ENCODE measurements at regions of chr18 and their contacts with region 1.

Region 1: DNA sequence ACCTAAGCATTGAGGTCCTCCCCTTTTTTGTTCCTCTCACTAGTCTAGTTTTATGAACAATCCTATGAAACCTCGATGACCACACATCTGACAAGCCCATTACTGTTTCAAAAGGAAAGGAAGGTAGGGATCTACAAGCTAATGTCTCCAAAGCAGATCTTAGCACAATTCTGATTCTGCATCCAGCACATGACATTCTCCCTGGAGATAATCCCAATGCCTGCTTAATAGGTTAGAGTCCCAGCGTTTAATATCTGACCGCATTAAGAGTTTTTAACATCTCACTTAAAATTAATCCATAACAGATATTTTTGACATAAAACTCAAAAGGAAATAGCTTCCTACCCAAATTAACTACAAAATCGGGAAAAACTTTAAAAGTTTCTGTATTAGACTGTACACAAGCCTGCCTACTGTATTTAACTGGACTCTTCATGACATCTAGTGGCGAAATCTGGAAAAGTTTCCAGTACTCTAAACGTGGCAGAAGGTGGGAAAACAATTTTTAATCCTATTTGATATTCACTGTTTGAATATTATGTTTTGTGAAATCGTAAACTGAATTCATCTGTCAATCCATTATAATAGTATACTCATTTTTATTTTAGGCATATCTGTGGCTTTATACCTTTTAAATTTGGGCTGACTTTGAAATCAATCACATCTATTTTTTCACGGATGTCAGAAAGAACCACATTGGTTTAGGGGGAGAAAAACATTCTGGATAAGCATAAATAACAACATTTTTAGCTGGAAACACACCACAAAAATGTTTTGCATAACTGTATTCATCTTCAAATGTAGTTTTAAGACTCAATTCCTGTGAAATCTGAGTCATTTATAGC is 62.4 kb downstream of the TXNL1 start:
- DNase-seq: no peak
- ATAC-seq: peak; percentile 64
- H3K4me3 Mint-ChIP-seq: no peak overlapping the region
- H3K27ac Mint-ChIP-seq: no peak overlapping the region
- H3K4me1 Mint-ChIP-seq: no peaks in the 10 kb centered on the region
- H3K27me3 Mint-ChIP-seq: peaks cover 5% of the 10 kb centered on the region
- CTCF ChIP-seq: no peak

Region 2: GRCh38 chr18:54679318-54680149 is 1896.5 kb before region 1 on chr18:
- CTCF ChIA-PET with region 1: no interaction called
- POLR2A ChIA-PET with region 1: no interaction called
- intact Hi-C with region 1: loop called (anchors 1 kb)
- DNase-seq: no peak
- ATAC-seq: peak; percentile 50
- H3K4me3 Mint-ChIP-seq: no peak overlapping the region
- H3K27ac Mint-ChIP-seq: no peak overlapping the region
- H3K4me1 Mint-ChIP-seq: no peaks in the 10 kb centered on the region
- H3K27me3 Mint-ChIP-seq: no peaks in the 10 kb centered on the region
- CTCF ChIP-seq: no peak

Region 3: GRCh38 chr18:54983041-54983686 is 1592.9 kb before region 1 on chr18:
- CTCF ChIA-PET with region 1: interaction called, 3 read pairs
- POLR2A ChIA-PET with region 1: no interaction called
- intact Hi-C with region 1: loop called (anchors 2 kb)
- DNase-seq: no peak
- ATAC-seq: peak; percentile 54
- H3K4me3 Mint-ChIP-seq: no peak overlapping the region
- H3K27ac Mint-ChIP-seq: no peak overlapping the region
- H3K4me1 Mint-ChIP-seq: no peaks in the 10 kb centered on the region
- H3K27me3 Mint-ChIP-seq: peaks cover 6% of the 10 kb centered on the region
- CTCF ChIP-seq: no peak

Region 4: GRCh38 chr18:56421647-56422046 is 154.4 kb before region 1 on chr18:
- CTCF ChIA-PET with region 1: no interaction called
- POLR2A ChIA-PET with region 1: no interaction called
- intact Hi-C with region 1: no loop called
- DNase-seq: no peak
- ATAC-seq: no peak
- H3K4me3 Mint-ChIP-seq: no peak overlapping the region
- H3K27ac Mint-ChIP-seq: no peak overlapping the region
- H3K4me1 Mint-ChIP-seq: no peaks in the 10 kb centered on the region
- H3K27me3 Mint-ChIP-seq: peaks cover 3% of the 10 kb centered on the region
- CTCF ChIP-seq: no peak

Measured in activated B cell treated with CpG ODN at 0.5 μM for 24 hours (primary cell).